H1 (cell line): ENCODE measurements at regions of chr10 and their contacts with region 1.

Region 1: DNA sequence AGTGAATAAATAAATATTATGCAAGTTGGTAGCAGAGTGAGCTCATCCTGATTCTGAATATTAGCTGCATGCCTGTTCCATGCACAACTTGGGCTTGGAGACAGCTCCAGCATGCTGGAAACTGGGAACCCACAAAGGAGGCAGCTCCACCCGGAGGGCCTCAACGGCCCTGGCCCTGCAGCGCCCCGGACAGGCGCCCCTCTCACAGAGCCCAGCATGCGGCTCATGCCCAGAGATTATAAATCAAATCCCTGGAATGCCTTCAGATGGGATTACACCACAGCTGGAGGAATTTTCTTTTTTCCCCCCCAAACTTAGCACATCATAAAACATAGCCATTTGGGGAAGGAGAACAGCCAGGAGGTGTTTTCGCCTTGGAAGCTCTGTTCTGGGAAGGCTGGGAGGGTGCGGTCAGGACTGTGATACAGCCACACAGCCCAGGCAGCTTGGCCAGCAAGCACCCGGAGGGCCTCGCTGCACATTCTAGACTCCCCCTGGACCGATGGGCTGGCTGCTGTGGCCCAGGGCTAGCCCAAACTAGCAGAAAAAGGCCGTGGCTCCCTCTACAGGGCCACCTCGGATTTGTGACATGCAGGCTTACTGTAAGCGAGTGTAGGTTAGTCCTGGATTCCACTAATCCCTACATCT is 102.4 kb downstream of the PTPN20 start:
- DNase-seq: no peak
- H3K4me3 ChIP-seq: no peak overlapping the region
- H3K27ac ChIP-seq: no peak overlapping the region
- H3K4me1 ChIP-seq: no peaks in the 10 kb centered on the region
- H3K27me3 ChIP-seq: no peaks in the 10 kb centered on the region
- CTCF ChIP-seq: peak; percentile 50 to 68 (median 50)
- EP300 ChIP-seq: no peak
- POLR2A ChIP-seq: no peak
- RAD21 ChIP-seq: peak; percentile 35 to 48; a peak in 3 of 4 replicates

Region 2: GRCh38 chr10:46273506-46274477 is 739.8 kb before region 1 on chr10:
- CTCF ChIA-PET with region 1: no interaction called
- POLR2A ChIA-PET with region 1: no interaction called
- DNase-seq: peak in 1 of 2 experiments; percentile 59
- H3K4me3 ChIP-seq: no peak overlapping the region
- H3K27ac ChIP-seq: no peak overlapping the region
- H3K4me1 ChIP-seq: no peaks in the 10 kb centered on the region
- H3K27me3 ChIP-seq: no peaks in the 10 kb centered on the region
- CTCF ChIP-seq: peak; percentile 58 to 62 (median 61)
- EP300 ChIP-seq: no peak
- POLR2A ChIP-seq: no peak
- RAD21 ChIP-seq: peak; percentile 75 to 81

Region 3: GRCh38 chr10:46992803-46993561 is 20.6 kb before region 1 on chr10:
- CTCF ChIA-PET with region 1: interaction called, 64 read pairs
- POLR2A ChIA-PET with region 1: no interaction called
- DNase-seq: peak in 1 of 2 experiments; percentile 56
- H3K4me3 ChIP-seq: no peak overlapping the region
- H3K27ac ChIP-seq: no peak overlapping the region
- H3K4me1 ChIP-seq: peaks cover 0 to 6% (median 2%) of the 10 kb centered on the region in 4 experiments; a peak in 3 of 7 replicates
- H3K27me3 ChIP-seq: no peaks in the 10 kb centered on the region
- CTCF ChIP-seq: peak in 2 of 3 experiments; percentile 43 to 60; a peak in 2 of 4 replicates
- EP300 ChIP-seq: no peak
- POLR2A ChIP-seq: no peak
- RAD21 ChIP-seq: peak; percentile 42 to 52; a peak in 3 of 4 replicates

Region 4: DNA sequence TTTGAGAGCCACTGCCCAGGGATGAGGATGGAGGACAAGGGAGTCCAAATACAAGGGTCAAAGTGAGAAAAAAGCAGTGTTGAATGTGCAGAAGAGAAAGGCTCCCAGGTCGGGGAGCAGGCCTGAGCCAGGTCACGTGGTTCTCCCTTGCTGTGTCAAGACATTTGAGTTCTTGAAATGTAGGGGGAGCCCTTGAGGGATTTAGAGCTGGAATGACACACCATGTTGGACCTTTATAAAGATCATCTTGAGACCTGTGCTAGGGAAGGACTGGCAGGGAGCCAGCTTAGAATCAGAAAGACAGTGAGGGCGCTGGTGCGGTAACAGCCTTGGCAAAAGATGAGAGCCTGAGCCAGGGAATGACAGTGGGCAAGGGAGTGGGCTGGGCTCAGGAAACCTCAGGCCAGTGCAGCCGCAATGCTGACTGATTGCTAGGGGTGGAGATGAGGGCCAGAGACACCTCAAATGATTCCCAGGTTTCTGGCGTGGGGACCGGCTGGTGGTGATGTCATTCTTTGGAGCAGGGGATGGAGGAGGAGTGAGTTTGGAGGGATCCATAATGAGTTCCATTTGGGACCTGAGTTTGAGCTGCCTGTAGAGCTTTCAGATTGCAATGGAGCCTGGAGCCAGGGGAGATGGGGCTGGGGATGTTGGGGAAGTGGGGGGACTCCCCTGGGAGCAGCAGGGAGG is 17.7 kb after region 1 on chr10:
- CTCF ChIA-PET with region 1: interaction called, 20 read pairs
- POLR2A ChIA-PET with region 1: no interaction called
- DNase-seq: peak in 1 of 2 experiments; percentile 45
- H3K4me3 ChIP-seq: no peak overlapping the region
- H3K27ac ChIP-seq: no peak overlapping the region
- H3K4me1 ChIP-seq: no peaks in the 10 kb centered on the region
- H3K27me3 ChIP-seq: no peaks in the 10 kb centered on the region
- CTCF ChIP-seq: peak in 2 of 3 experiments; percentile 25 to 44; a peak in 3 of 4 replicates
- EP300 ChIP-seq: no peak
- POLR2A ChIP-seq: no peak
- RAD21 ChIP-seq: peak in 1 of 2 experiments; percentile 29; a peak in 2 of 4 replicates